WTC11 (cell line): ENCODE measurements at regions of chr7 and their contacts with region 1.

Region 1: DNA sequence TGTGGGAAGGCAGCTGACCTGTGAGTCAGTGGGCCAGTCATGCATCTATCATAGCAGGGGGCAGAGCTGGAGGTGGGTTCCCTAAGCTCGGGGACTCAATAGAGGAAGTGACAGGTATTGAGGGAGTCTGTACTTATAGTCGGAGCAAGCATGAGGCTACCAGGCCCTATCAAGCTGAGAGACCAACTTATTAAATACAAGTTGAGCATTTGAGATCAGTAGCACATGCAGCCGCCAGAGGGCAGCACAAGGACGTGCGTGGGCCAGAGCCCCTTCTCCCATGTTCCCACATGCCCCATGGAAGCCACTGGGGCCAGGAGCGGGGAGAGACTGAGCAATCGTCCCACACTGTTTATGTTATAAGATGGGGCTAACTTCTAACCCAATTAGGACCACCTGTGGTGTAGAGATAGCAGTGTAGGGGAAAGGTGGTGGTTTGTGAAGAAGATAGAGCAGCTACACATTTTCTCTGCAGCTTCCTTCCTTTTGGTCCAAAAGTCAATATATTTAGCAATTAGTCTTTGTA is 13.0 kb upstream of the STK31 start:
- DNase-seq: peak; percentile 85
- ATAC-seq: peak; percentile 99
- H3K4me3 Mint-ChIP-seq: no peak overlapping the region
- H3K27ac Mint-ChIP-seq: no peak overlapping the region
- H3K4me1 Mint-ChIP-seq: no peaks in the 10 kb centered on the region
- H3K27me3 Mint-ChIP-seq: no peaks in the 10 kb centered on the region
- CTCF ChIP-seq: peak; percentile 86

Region 2: GRCh38 chr7:23570592-23571200 is 126.3 kb before region 1 on chr7:
- CTCF ChIA-PET with region 1: interaction called, 15 read pairs
- POLR2A ChIA-PET with region 1: interaction called, 3 read pairs
- DNase-seq: peak; percentile 84
- ATAC-seq: peak; percentile 99
- H3K4me3 Mint-ChIP-seq: no peak overlapping the region
- H3K27ac Mint-ChIP-seq: peak overlapping the region; percentile 43; the same call in 1 of the 2 replicates
- H3K4me1 Mint-ChIP-seq: peaks cover 3% of the 10 kb centered on the region
- H3K27me3 Mint-ChIP-seq: no peaks in the 10 kb centered on the region
- CTCF ChIP-seq: peak; percentile 63

Region 3: GRCh38 chr7:23654508-23654907 is 42.5 kb before region 1 on chr7:
- CTCF ChIA-PET with region 1: interaction called, 25 read pairs
- POLR2A ChIA-PET with region 1: no interaction called
- DNase-seq: peak; percentile 61
- ATAC-seq: peak; percentile 75
- H3K4me3 Mint-ChIP-seq: no peak overlapping the region
- H3K27ac Mint-ChIP-seq: no peak overlapping the region
- H3K4me1 Mint-ChIP-seq: 0 out of 2 replicates have a peak, but pooled peaks cover 3% of the 10 kb centered on the region
- H3K27me3 Mint-ChIP-seq: no peaks in the 10 kb centered on the region; the same call in none of the 2 replicates
- CTCF ChIP-seq: peak; percentile 46

Region 4: GRCh38 chr7:23679898-23680413 is 17.0 kb before region 1 on chr7 and contains the start of gene FAM221A:
- CTCF ChIA-PET with region 1: interaction called, 28 read pairs
- POLR2A ChIA-PET with region 1: interaction called, 3 read pairs
- DNase-seq: peak; percentile 94
- ATAC-seq: peak; percentile 94
- H3K4me3 Mint-ChIP-seq: peak within 1 kb of the TSS; percentile 86
- H3K27ac Mint-ChIP-seq: peak within 1 kb of the TSS; percentile 91
- H3K4me1 Mint-ChIP-seq: peaks cover 18% of the 10 kb centered on the region
- H3K27me3 Mint-ChIP-seq: peaks cover 21% of the 10 kb centered on the region
- CTCF ChIP-seq: peak; percentile 48
- total RNA-seq, gene FAM221A: 22.6 to 24.9 TPM (median 23.3 TPM) in 3 replicates

Region 5: GRCh38 chr7:23787272-23787671 is 90.3 kb after region 1 on chr7:
- CTCF ChIA-PET with region 1: no interaction called
- POLR2A ChIA-PET with region 1: no interaction called
- DNase-seq: peak; percentile 29
- ATAC-seq: no peak
- H3K4me3 Mint-ChIP-seq: no peak overlapping the region
- H3K27ac Mint-ChIP-seq: no peak overlapping the region
- H3K4me1 Mint-ChIP-seq: no peaks in the 10 kb centered on the region
- H3K27me3 Mint-ChIP-seq: no peaks in the 10 kb centered on the region
- CTCF ChIP-seq: no peak